ENCODE measurements at regions of chr17 and their contacts with region 1.

Region 1: GRCh38 chr17:59941131-59941530 is 23.4 kb downstream of the RNFT1 start:
- DNase-seq: no peak
- ATAC-seq: no peak
- H3K4me3 ChIP-seq: no peak overlapping the region
- H3K27ac ChIP-seq: no peak overlapping the region
- H3K4me1 ChIP-seq: no peaks in the 10 kb centered on the region
- H3K27me3 ChIP-seq: no peaks in the 10 kb centered on the region
- CTCF ChIP-seq: no peak
- POLR2A ChIP-seq: no peak
- RAD21 ChIP-seq: no peak

Region 2: DNA sequence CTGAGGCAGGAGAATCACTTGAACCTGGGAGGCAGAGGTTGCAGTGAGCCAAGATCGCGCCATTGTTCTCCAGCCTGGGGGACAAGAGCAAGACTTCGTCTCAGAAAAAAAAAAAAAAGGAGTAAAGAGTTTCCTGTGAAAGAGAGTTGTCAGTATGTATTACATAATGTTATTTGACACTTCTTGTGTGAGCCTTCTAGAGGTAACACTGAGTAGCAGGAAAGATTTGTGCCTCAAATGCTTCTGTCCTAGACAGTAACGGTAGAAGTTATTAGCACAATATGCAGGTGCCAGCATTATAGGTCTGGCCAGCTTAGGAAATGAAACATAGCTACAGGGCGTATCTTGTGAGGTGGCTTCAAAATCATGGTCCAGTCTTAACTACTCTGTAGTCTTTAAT is 42.0 kb before region 1 on chr17:
- CTCF ChIA-PET with region 1: no interaction called
- POLR2A ChIA-PET with region 1: no interaction called
- dilution Hi-C with region 1: no loop called
- in situ Hi-C with region 1: no loop called
- intact Hi-C with region 1: no loop called
- DNase-seq: no peak
- ATAC-seq: no peak
- H3K4me3 ChIP-seq: no peak overlapping the region
- H3K27ac ChIP-seq: no peak overlapping the region
- H3K4me1 ChIP-seq: peaks cover 2% of the 10 kb centered on the region; the same call in 1 of the 2 replicates
- H3K27me3 ChIP-seq: no peaks in the 10 kb centered on the region
- CTCF ChIP-seq: no peak
- POLR2A ChIP-seq: no peak
- RAD21 ChIP-seq: no peak

Region 3: DNA sequence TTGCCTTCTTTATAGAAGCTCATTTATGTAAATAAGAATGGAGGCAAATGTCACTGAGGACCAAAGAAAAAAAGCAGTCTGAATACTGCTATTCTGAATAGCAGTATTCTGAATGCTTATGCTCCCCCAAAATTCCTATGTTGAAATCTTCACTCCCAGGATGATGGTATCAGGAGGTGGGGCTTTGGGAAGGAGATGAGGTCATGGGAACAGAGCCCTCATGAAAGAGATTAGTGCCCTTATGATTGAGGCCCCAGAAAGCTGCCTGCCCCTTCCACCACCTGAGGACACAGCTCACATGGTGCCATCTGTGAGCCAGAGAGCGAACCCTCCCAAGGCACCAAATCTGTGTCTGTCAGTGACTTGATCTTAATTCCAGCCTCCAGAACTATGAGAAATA is 108.8 kb after region 1 on chr17:
- CTCF ChIA-PET with region 1: no interaction called
- POLR2A ChIA-PET with region 1: no interaction called
- dilution Hi-C with region 1: loop called (anchors 25 kb)
- in situ Hi-C with region 1: loop called (anchors 10 kb)
- intact Hi-C with region 1: no loop called
- DNase-seq: peak; percentile 16
- ATAC-seq: no peak; the same call in 1 of the 2 replicates
- H3K4me3 ChIP-seq: no peak overlapping the region
- H3K27ac ChIP-seq: no peak overlapping the region
- H3K4me1 ChIP-seq: no peaks in the 10 kb centered on the region
- H3K27me3 ChIP-seq: no peaks in the 10 kb centered on the region
- CTCF ChIP-seq: no peak
- POLR2A ChIP-seq: no peak
- RAD21 ChIP-seq: no peak

Region 4: DNA sequence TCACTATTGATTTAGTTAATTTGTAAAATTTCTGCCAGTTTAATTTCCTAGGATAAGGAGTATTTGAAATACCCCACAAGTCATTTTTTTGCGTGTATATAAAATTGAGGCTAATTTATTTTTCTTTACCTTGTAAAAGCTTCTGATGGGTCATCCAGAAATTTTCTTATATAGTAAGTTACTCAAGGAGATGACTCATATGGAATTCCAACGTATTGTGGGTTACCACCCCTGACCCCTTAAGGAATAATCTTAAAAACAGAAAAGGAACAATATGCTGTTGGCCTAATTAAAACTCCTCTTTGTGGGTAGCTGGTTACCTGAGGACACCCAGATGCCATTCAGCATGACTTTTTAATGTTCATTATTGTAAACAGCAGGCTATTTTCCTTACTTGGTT is 124.0 kb after region 1 on chr17:
- CTCF ChIA-PET with region 1: no interaction called
- POLR2A ChIA-PET with region 1: no interaction called
- dilution Hi-C with region 1: loop called (anchors 25 kb)
- in situ Hi-C with region 1: no loop called
- intact Hi-C with region 1: no loop called
- DNase-seq: peak; percentile 65
- ATAC-seq: peak; percentile 63
- H3K4me3 ChIP-seq: no peak overlapping the region
- H3K27ac ChIP-seq: no peak overlapping the region
- H3K4me1 ChIP-seq: peaks cover 7% of the 10 kb centered on the region
- H3K27me3 ChIP-seq: no peaks in the 10 kb centered on the region
- CTCF ChIP-seq: no peak
- POLR2A ChIP-seq: no peak
- RAD21 ChIP-seq: no peak

Region 5: GRCh38 chr17:60188759-60189158 is 247.6 kb after region 1 on chr17:
- CTCF ChIA-PET with region 1: no interaction called
- POLR2A ChIA-PET with region 1: no interaction called
- dilution Hi-C with region 1: no loop called
- in situ Hi-C with region 1: loop called (anchors 25 kb)
- intact Hi-C with region 1: no loop called
- DNase-seq: no peak
- ATAC-seq: no peak
- H3K4me3 ChIP-seq: no peak overlapping the region
- H3K27ac ChIP-seq: no peak overlapping the region
- H3K4me1 ChIP-seq: no peaks in the 10 kb centered on the region
- H3K27me3 ChIP-seq: no peaks in the 10 kb centered on the region
- CTCF ChIP-seq: no peak
- POLR2A ChIP-seq: no peak
- RAD21 ChIP-seq: no peak

Region 6: DNA sequence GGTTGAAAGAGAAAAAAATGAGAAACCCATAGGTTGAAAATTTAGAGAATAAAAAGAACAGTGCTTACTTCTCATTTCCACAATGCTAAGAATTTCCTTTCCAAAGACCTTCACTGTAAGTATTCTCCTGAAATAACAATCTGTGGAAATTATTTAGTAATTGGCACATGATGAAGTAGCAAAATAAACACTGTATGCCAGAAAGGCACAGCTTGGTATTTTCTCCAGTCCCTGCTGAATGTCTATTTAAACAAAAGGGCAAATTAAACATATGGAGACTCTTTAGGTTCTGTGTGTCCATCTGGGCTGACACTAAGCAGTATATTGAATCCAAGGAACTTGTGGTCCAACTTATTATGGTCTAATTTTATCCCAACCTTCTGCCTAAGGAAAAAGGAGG is 527.2 kb after region 1 on chr17:
- CTCF ChIA-PET with region 1: no interaction called
- POLR2A ChIA-PET with region 1: no interaction called
- dilution Hi-C with region 1: no loop called
- in situ Hi-C with region 1: no loop called
- intact Hi-C with region 1: no loop called
- DNase-seq: peak; percentile 43
- ATAC-seq: peak; percentile 56
- H3K4me3 ChIP-seq: no peak overlapping the region
- H3K27ac ChIP-seq: peak overlapping the region; percentile 99; the same call in 1 of the 2 replicates
- H3K4me1 ChIP-seq: peaks cover 8% of the 10 kb centered on the region
- H3K27me3 ChIP-seq: no peaks in the 10 kb centered on the region
- CTCF ChIP-seq: no peak
- POLR2A ChIP-seq: no peak
- RAD21 ChIP-seq: no peak